ENCODE measurements at regions of chr1 and their contacts with region 1.

Region 1: DNA sequence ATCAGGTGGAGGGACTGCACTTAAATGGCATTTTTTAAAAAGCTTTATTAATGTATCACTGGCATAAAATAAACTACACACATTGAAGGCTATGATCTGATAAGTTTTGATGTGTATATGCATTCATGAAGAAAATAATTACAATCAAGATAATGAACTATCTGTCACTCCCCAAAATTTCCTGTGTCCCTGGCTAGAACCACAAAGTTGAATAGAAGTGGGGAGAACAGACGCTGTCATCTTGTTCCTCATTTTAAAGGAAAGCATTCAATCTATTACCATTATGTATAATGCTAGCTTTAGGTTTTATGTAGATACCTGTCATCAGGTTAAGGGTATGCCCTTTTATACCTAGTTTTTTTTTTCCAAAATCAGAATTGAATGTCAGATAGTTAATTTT is 38.1 kb upstream of the C1orf87 start:
- DNase-seq: no peak
- ATAC-seq: no peak
- H3K4me3 ChIP-seq: no peak overlapping the region
- H3K27ac ChIP-seq: no peak overlapping the region
- H3K4me1 ChIP-seq: no peaks in the 10 kb centered on the region
- H3K27me3 ChIP-seq: no peaks in the 10 kb centered on the region
- CTCF ChIP-seq: no peak

Region 2: GRCh38 chr1:60126723-60127122 is 15.0 kb after region 1 on chr1:
- intact Hi-C with region 1: loop called in 1 of 2 experiments (anchors 1 kb)
- DNase-seq: no peak
- ATAC-seq: no peak
- H3K4me3 ChIP-seq: no peak overlapping the region
- H3K27ac ChIP-seq: no peak overlapping the region
- H3K4me1 ChIP-seq: no peaks in the 10 kb centered on the region
- H3K27me3 ChIP-seq: no peaks in the 10 kb centered on the region
- CTCF ChIP-seq: peak; percentile 8

Region 3: DNA sequence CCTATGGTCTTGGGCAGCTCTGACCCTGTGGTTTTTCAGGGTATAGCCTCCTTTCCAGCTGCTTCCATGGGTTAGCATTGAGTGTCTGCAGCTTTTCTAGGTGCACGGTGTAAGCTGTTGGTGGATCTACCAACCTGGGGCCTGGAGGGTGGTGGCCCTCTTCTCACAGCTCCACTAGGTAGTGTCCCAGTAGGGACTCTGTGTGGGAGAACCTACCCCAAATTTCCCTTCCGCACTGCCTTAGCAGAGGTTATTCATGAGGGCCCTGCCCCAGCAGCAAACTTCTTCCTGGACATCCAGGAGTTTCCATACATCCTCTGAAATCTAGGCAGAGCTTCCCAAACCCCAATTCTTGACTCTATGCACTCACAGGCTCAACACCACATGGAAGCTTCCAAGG is 72.8 kb after region 1 on chr1:
- intact Hi-C with region 1: no loop called
- DNase-seq: no peak
- ATAC-seq: no peak
- H3K4me3 ChIP-seq: no peak overlapping the region
- H3K27ac ChIP-seq: no peak overlapping the region
- H3K4me1 ChIP-seq: no peaks in the 10 kb centered on the region
- H3K27me3 ChIP-seq: peaks cover 0 to 3% (median 0%) of the 10 kb centered on the region in 3 donors
- CTCF ChIP-seq: no peak

Region 4: GRCh38 chr1:60265560-60266535 is 154.1 kb after region 1 on chr1:
- intact Hi-C with region 1: no loop called
- DNase-seq: no peak
- ATAC-seq: no peak
- H3K4me3 ChIP-seq: no peak overlapping the region
- H3K27ac ChIP-seq: no peak overlapping the region
- H3K4me1 ChIP-seq: no peaks in the 10 kb centered on the region
- H3K27me3 ChIP-seq: no peaks in the 10 kb centered on the region
- CTCF ChIP-seq: no peak

Measured in psoas muscle (tissue), 8 donors.